Endothelial cell of umbilical vein (primary cell): ENCODE measurements at regions of chr4 and their contacts with region 1.

Region 1: GRCh38 chr4:151304755-151305154 is 20.6 kb downstream of the SH3D19 start:
- DNase-seq: peak; percentile 30
- H3K4me3 ChIP-seq: no peak overlapping the region
- H3K27ac ChIP-seq: no peak overlapping the region
- H3K4me1 ChIP-seq: no peaks in the 10 kb centered on the region
- H3K27me3 ChIP-seq: no peaks in the 10 kb centered on the region
- CTCF ChIP-seq: no peak
- POLR2A ChIP-seq: no peak

Region 2: GRCh38 chr4:151291485-151291884 is 13.3 kb before region 1 on chr4:
- CTCF ChIA-PET with region 1: interaction called, 18 read pairs
- POLR2A ChIA-PET with region 1: no interaction called
- dilution Hi-C with region 1: no loop called
- intact Hi-C with region 1: no loop called
- DNase-seq: no peak
- H3K4me3 ChIP-seq: no peak overlapping the region
- H3K27ac ChIP-seq: peak overlapping the region; percentile 11
- H3K4me1 ChIP-seq: peaks cover 29% of the 10 kb centered on the region
- H3K27me3 ChIP-seq: no peaks in the 10 kb centered on the region
- CTCF ChIP-seq: no peak
- POLR2A ChIP-seq: no peak

Region 3: GRCh38 chr4:151315212-151315886 is 10.6 kb after region 1 on chr4:
- CTCF ChIA-PET with region 1: interaction called, 10 read pairs
- POLR2A ChIA-PET with region 1: no interaction called
- dilution Hi-C with region 1: no loop called
- intact Hi-C with region 1: no loop called
- DNase-seq: peak; percentile 64
- H3K4me3 ChIP-seq: peak overlapping the region in 1 of 3 experiments; percentile 24
- H3K27ac ChIP-seq: peak overlapping the region; percentile 72
- H3K4me1 ChIP-seq: peaks cover 48% of the 10 kb centered on the region
- H3K27me3 ChIP-seq: no peaks in the 10 kb centered on the region
- CTCF ChIP-seq: no peak
- POLR2A ChIP-seq: no peak

Region 4: GRCh38 chr4:151331276-151332042 is 26.7 kb after region 1 on chr4:
- CTCF ChIA-PET with region 1: no interaction called
- POLR2A ChIA-PET with region 1: no interaction called
- dilution Hi-C with region 1: no loop called
- intact Hi-C with region 1: no loop called
- DNase-seq: no peak
- H3K4me3 ChIP-seq: no peak overlapping the region
- H3K27ac ChIP-seq: no peak overlapping the region
- H3K4me1 ChIP-seq: no peaks in the 10 kb centered on the region
- H3K27me3 ChIP-seq: no peaks in the 10 kb centered on the region
- CTCF ChIP-seq: no peak
- POLR2A ChIP-seq: no peak